Naive thymus-derived CD4-positive, alpha-beta T cell (primary cell): ENCODE measurements at regions of chr14 and their contacts with region 1.

Region 1: DNA sequence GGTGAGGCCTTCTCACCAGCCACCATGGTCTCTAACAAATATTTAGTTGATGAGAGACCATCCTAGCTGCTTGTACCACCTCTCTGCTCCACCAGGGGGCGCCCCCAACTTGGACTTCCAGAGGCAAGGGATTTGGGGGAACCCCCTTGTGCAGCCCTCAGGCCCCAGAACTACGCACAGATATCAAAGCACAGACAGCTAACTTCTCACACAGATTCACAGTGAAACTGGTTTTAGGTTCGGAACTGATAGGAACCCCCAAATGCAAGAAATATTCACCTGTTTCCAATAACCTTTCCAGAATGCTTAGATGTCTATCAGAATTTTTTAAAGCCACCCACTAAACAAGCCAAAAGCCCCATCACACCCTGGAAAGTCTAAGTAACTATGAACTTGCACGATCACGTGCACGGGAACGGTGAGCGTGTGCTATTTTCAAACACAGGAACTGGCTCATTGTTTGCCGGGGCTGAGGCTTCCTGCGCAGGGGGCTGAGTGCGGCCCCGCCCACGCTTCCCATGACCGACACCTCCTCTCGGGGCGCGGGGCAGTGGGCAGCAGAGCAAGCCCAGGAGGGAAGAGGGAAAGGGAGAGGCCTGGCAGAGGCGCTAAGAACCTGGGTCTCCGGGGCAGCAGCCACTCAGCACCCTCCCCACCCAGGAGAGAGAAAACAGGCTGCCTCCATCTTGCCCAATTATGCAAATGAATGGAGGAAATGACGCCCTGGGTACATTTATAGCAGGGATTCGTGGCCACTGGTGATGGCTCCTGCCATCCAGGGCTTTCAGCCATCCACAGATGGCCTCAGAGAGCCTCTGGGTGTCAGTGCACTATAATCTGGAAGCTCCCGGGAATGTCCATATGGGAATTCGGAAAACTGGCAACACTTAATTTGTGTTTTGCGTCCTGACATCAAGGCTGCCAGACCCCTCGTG is 79.4 kb upstream of the GPR68 start:
- DNase-seq: peak; percentile 90 to 95 (median 92)
- ATAC-seq: peak; percentile 94
- H3K4me3 ChIP-seq: peak overlapping the region; percentile 39
- H3K4me3 Mint-ChIP-seq: peak overlapping the region; percentile 77 to 98 (median 84)
- H3K27ac ChIP-seq: peak overlapping the region; percentile 81
- H3K27ac Mint-ChIP-seq: peak overlapping the region; percentile 94 to 100 (median 99)
- H3K4me1 ChIP-seq: peaks cover 48 to 60% of the 10 kb centered on the region in 2 donors
- H3K4me1 Mint-ChIP-seq: peaks cover 52 to 91% (median 82%) of the 10 kb centered on the region in 7 donors
- H3K27me3 ChIP-seq: no peaks in the 10 kb centered on the region
- H3K27me3 Mint-ChIP-seq: no peaks in the 10 kb centered on the region

Region 2: GRCh38 chr14:91228112-91229004 is 95.6 kb before region 1 on chr14:
- CTCF ChIA-PET with region 1: no interaction called
- POLR2A ChIA-PET with region 1: no interaction called
- intact Hi-C with region 1: no loop called
- DNase-seq: peak; percentile 42 to 86 (median 60)
- ATAC-seq: peak; percentile 89
- H3K4me3 ChIP-seq: peak overlapping the region; percentile 34
- H3K4me3 Mint-ChIP-seq: peak overlapping the region; percentile 48 to 87 (median 73)
- H3K27ac ChIP-seq: peak overlapping the region; percentile 57
- H3K27ac Mint-ChIP-seq: peak overlapping the region; percentile 9 to 98 (median 88)
- H3K4me1 ChIP-seq: peaks cover 89 to 92% of the 10 kb centered on the region in 2 donors
- H3K4me1 Mint-ChIP-seq: peaks cover 69 to 99% (median 93%) of the 10 kb centered on the region in 7 donors
- H3K27me3 ChIP-seq: no peaks in the 10 kb centered on the region
- H3K27me3 Mint-ChIP-seq: no peaks in the 10 kb centered on the region

Region 3: GRCh38 chr14:91350813-91351511 is 27.0 kb after region 1 on chr14:
- CTCF ChIA-PET with region 1: interaction called, 12 read pairs
- POLR2A ChIA-PET with region 1: interaction called, 27 read pairs
- intact Hi-C with region 1: loop called (anchors 1 kb)
- DNase-seq: peak in 8 of 9 donors; percentile 55 to 82 (median 72)
- ATAC-seq: peak; percentile 75
- H3K4me3 ChIP-seq: peak overlapping the region; percentile 31
- H3K4me3 Mint-ChIP-seq: peak overlapping the region; percentile 80 to 97 (median 89)
- H3K27ac ChIP-seq: peak overlapping the region; percentile 75
- H3K27ac Mint-ChIP-seq: peak overlapping the region; percentile 86 to 98 (median 95)
- H3K4me1 ChIP-seq: peaks cover 71 to 77% of the 10 kb centered on the region in 2 donors
- H3K4me1 Mint-ChIP-seq: peaks cover 78 to 97% (median 89%) of the 10 kb centered on the region in 7 donors
- H3K27me3 ChIP-seq: no peaks in the 10 kb centered on the region
- H3K27me3 Mint-ChIP-seq: no peaks in the 10 kb centered on the region

Region 4: GRCh38 chr14:91373591-91374254 is 49.8 kb after region 1 on chr14:
- CTCF ChIA-PET with region 1: interaction called, 4 read pairs
- POLR2A ChIA-PET with region 1: interaction called, 3 read pairs
- intact Hi-C with region 1: loop called (anchors 1 to 2 kb)
- DNase-seq: peak in 6 of 9 donors; percentile 42 to 61 (median 56)
- ATAC-seq: peak; percentile 59
- H3K4me3 ChIP-seq: peak overlapping the region; percentile 61
- H3K4me3 Mint-ChIP-seq: peak overlapping the region; percentile 79 to 89 (median 86)
- H3K27ac ChIP-seq: peak overlapping the region; percentile 72
- H3K27ac Mint-ChIP-seq: peak overlapping the region; percentile 89 to 99 (median 97)
- H3K4me1 ChIP-seq: peaks cover 94 to 98% of the 10 kb centered on the region in 2 donors
- H3K4me1 Mint-ChIP-seq: peaks cover 84 to 100% (median 98%) of the 10 kb centered on the region in 7 donors
- H3K27me3 ChIP-seq: no peaks in the 10 kb centered on the region
- H3K27me3 Mint-ChIP-seq: no peaks in the 10 kb centered on the region

Region 5: DNA sequence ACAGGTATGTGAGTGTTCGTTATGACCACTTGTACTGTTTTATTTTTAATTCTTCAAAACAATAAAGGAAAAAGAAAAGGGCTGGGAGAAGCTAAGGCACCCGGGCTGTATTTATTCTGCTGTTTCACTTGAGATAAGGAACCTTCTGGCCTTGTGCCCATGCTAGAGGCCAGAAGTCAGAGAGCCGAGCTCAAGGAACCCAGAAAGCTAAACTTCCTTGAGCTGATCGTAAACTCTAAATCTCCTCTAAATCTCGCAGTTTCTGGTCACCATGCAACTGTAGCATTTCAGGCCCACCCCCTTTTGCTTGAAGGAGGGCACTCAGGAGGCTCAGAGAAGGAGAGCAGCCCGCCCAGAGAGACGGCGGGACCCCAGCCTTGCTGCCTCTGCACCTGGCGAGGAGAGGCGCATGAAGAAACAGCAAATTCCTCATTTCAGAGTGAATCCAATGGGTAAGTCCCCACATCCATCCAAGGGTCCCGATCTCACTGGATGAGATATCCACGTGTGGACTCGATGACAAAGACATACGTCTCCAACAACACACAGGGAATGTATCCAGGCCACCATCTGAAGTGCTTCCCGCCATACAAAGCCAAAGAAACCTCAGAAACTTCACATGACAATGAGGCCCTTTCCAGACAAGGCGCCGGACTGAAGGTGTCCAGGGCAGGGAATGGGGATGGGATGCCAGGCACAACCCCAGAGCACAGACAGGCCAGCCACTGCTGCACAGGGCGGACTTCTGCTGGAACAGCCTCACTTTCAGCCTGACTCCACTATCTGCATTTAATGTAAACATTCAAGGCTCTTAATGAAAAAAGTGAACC is 79.0 kb after region 1 on chr14:
- CTCF ChIA-PET with region 1: interaction called, 8 read pairs
- POLR2A ChIA-PET with region 1: interaction called, 7 read pairs
- intact Hi-C with region 1: loop called in 1 of 2 experiments (anchors 1 kb)
- DNase-seq: no peak
- ATAC-seq: peak; percentile 2
- H3K4me3 ChIP-seq: peak overlapping the region; percentile 21
- H3K4me3 Mint-ChIP-seq: peak overlapping the region; percentile 64 to 92 (median 84)
- H3K27ac ChIP-seq: peak overlapping the region; percentile 95
- H3K27ac Mint-ChIP-seq: peak overlapping the region; percentile 71 to 99 (median 95)
- H3K4me1 ChIP-seq: peaks cover 86 to 90% of the 10 kb centered on the region in 2 donors
- H3K4me1 Mint-ChIP-seq: peaks cover 85 to 97% (median 90%) of the 10 kb centered on the region in 7 donors
- H3K27me3 ChIP-seq: no peaks in the 10 kb centered on the region
- H3K27me3 Mint-ChIP-seq: no peaks in the 10 kb centered on the region

Region 6: GRCh38 chr14:91477388-91477787 is 153.4 kb after region 1 on chr14:
- CTCF ChIA-PET with region 1: no interaction called
- POLR2A ChIA-PET with region 1: no interaction called
- intact Hi-C with region 1: no loop called
- DNase-seq: no peak
- ATAC-seq: no peak
- H3K4me3 ChIP-seq: no peak overlapping the region
- H3K4me3 Mint-ChIP-seq: no peak overlapping the region
- H3K27ac ChIP-seq: no peak overlapping the region
- H3K27ac Mint-ChIP-seq: peak overlapping the region in 6 of 9 donors; percentile 4 to 81 (median 76)
- H3K4me1 ChIP-seq: peaks cover 0 to 10% of the 10 kb centered on the region in 2 donors
- H3K4me1 Mint-ChIP-seq: peaks cover 21 to 54% (median 50%) of the 10 kb centered on the region in 7 donors
- H3K27me3 ChIP-seq: no peaks in the 10 kb centered on the region
- H3K27me3 Mint-ChIP-seq: no peaks in the 10 kb centered on the region